PC-9 (cell line): ENCODE measurements at regions of chr12 and their contacts with region 1.

Region 1: GRCh38 chr12:105235732-105236476 is at the start of gene APPL2:
- DNase-seq: peak; percentile 72 to 80
- H3K4me3 ChIP-seq: peak within 1 kb of the TSS; percentile 74
- H3K27ac ChIP-seq: 0 out of 2 replicates have a peak within 1 kb of the TSS, but pooled peaks have one; percentile 35
- H3K4me1 ChIP-seq: peaks cover 15% of the 10 kb centered on the region
- H3K27me3 ChIP-seq: peaks cover 7% of the 10 kb centered on the region; the same call in 1 of the 2 replicates
- CTCF ChIP-seq: peak; percentile 55; the same call in 1 of the 2 replicates
- total RNA-seq, gene APPL2: 24.3 and 24.6 TPM in 2 replicates

Region 2: GRCh38 chr12:105171691-105172436 is 64.0 kb before region 1 on chr12:
- CTCF ChIA-PET with region 1: no interaction called
- POLR2A ChIA-PET with region 1: interaction called, 13 read pairs
- intact Hi-C with region 1: no loop called
- DNase-seq: no peak
- H3K4me3 ChIP-seq: no peak overlapping the region
- H3K27ac ChIP-seq: no peak overlapping the region
- H3K4me1 ChIP-seq: no peaks in the 10 kb centered on the region
- H3K27me3 ChIP-seq: no peaks in the 10 kb centered on the region
- CTCF ChIP-seq: no peak

Region 3: GRCh38 chr12:105296116-105297089 is 60.5 kb after region 1 on chr12:
- CTCF ChIA-PET with region 1: no interaction called
- POLR2A ChIA-PET with region 1: no interaction called
- intact Hi-C with region 1: no loop called
- DNase-seq: no peak
- H3K4me3 ChIP-seq: no peak overlapping the region
- H3K27ac ChIP-seq: no peak overlapping the region
- H3K4me1 ChIP-seq: no peaks in the 10 kb centered on the region
- H3K27me3 ChIP-seq: peaks cover 25% of the 10 kb centered on the region
- CTCF ChIP-seq: no peak